T-cell (primary cell): ENCODE measurements at regions of chr7 and their contacts with region 1.

Region 1: GRCh38 chr7:140289804-140290203 is 108.5 kb downstream of the SLC37A3 start:
- DNase-seq: no peak
- ATAC-seq: no peak
- H3K4me3 ChIP-seq: no peak overlapping the region
- H3K4me3 Mint-ChIP-seq: no peak overlapping the region
- H3K27ac ChIP-seq: no peak overlapping the region
- H3K27ac Mint-ChIP-seq: no peak overlapping the region
- H3K4me1 ChIP-seq: no peaks in the 10 kb centered on the region
- H3K4me1 Mint-ChIP-seq: no peaks in the 10 kb centered on the region
- H3K27me3 ChIP-seq: no peaks in the 10 kb centered on the region
- H3K27me3 Mint-ChIP-seq: no peaks in the 10 kb centered on the region

Region 2: DNA sequence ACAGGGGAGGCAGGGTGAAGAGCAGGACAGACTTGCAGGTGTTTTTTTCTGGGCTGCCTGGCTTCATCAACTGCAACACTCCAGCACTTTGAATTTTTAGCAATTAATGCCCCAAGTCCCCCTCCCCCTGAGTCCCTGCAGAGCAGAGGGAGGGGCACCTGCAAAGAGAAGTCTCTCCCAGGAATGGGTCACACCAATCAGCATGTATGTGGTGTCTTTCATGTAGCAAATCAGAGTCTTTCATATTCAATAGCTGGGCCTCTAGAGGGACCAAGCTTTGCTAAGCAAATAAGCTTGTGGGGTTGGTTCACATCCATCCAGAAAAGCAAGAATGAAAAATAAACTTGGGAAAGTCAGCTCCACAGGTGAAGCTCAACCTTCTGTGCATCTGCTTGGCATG is 317.8 kb before region 1 on chr7:
- CTCF ChIA-PET with region 1: no interaction called
- POLR2A ChIA-PET with region 1: no interaction called
- DNase-seq: no peak
- ATAC-seq: no peak
- H3K4me3 ChIP-seq: no peak overlapping the region
- H3K4me3 Mint-ChIP-seq: no peak overlapping the region
- H3K27ac ChIP-seq: no peak overlapping the region
- H3K27ac Mint-ChIP-seq: no peak overlapping the region
- H3K4me1 ChIP-seq: no peaks in the 10 kb centered on the region
- H3K4me1 Mint-ChIP-seq: peaks cover 0 to 4% (median 3%) of the 10 kb centered on the region in 3 donors
- H3K27me3 ChIP-seq: peaks cover 0 to 21% of the 10 kb centered on the region in 2 experiments
- H3K27me3 Mint-ChIP-seq: peaks cover 0 to 6% of the 10 kb centered on the region in 2 donors

Region 3: DNA sequence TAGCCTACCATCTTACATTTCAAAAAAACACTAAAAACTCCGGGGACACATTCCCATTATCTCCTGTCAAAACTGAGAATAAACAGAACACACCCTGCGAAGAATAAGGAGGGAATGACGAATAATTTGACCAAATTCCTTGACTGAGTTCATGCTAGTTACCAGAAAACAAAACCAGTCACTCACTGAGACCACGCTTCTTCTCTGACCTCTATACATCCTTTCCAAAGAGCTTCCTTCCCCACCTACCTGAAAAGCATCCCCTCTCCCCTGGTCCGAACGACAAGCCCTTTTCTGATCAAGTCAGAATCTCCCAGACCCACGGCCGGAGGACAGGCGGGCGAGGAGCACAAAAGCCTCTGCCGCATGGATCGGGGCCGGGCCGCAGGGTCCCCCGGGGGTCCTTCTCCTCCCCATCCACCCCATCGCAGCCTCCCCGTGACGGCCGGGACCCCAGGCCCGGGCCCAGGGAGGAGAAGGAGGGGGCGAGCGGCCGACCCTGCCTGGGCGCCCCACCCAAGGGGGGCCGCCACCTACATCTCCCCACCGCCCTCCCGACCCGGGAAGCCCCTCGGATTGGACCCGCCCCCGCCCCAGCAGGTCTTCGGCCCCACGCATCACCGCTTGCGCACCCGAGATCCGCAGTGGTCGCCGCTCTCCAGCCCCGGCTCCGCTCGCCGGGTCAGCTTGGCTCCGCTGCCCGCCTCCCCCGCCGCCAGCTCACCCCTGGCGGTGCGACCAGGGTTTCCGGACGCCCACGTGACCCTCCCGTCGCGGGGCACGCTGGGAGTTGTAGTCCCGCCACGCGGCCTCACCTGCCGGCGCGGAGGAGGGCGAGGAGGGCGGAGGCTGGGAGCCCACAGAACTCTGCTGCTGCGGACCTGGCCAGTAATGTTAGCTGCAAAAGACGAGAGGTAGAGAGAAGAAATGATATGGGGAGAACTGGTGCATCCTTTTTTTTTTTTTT is 108.3 kb after region 1 on chr7 and contains the start of gene SLC37A3:
- CTCF ChIA-PET with region 1: no interaction called
- POLR2A ChIA-PET with region 1: no interaction called
- DNase-seq: peak; percentile 62 to 89 (median 81)
- ATAC-seq: peak; percentile 97 to 99 (median 99)
- H3K4me3 ChIP-seq: peak within 1 kb of the TSS; percentile 71 to 82
- H3K4me3 Mint-ChIP-seq: peak within 1 kb of the TSS; percentile 86 to 95 (median 93)
- H3K27ac ChIP-seq: peak within 1 kb of the TSS; percentile 28
- H3K27ac Mint-ChIP-seq: peak within 1 kb of the TSS; percentile 77 to 84
- H3K4me1 ChIP-seq: peaks cover 2 to 22% of the 10 kb centered on the region in 2 experiments
- H3K4me1 Mint-ChIP-seq: peaks cover 26 to 29% (median 27%) of the 10 kb centered on the region in 3 donors
- H3K27me3 ChIP-seq: no peaks in the 10 kb centered on the region
- H3K27me3 Mint-ChIP-seq: no peaks in the 10 kb centered on the region
- total RNA-seq, gene SLC37A3: 23.2 to 50.5 (median 38.1) TPM

Region 4: GRCh38 chr7:140517546-140518369 is 228.0 kb after region 1 on chr7:
- CTCF ChIA-PET with region 1: interaction called in 1 of 2 experiments, 10 read pairs
- POLR2A ChIA-PET with region 1: no interaction called
- DNase-seq: peak; percentile 12 to 72 (median 42)
- ATAC-seq: peak; percentile 48 to 69 (median 53)
- H3K4me3 ChIP-seq: no peak overlapping the region
- H3K4me3 Mint-ChIP-seq: no peak overlapping the region
- H3K27ac ChIP-seq: no peak overlapping the region
- H3K27ac Mint-ChIP-seq: no peak overlapping the region
- H3K4me1 ChIP-seq: peaks cover 0 to 4% of the 10 kb centered on the region in 2 experiments
- H3K4me1 Mint-ChIP-seq: peaks cover 4 to 5% (median 4%) of the 10 kb centered on the region in 3 donors
- H3K27me3 ChIP-seq: peaks cover 0 to 35% of the 10 kb centered on the region in 2 experiments
- H3K27me3 Mint-ChIP-seq: peaks cover 6 to 12% of the 10 kb centered on the region in 2 donors